Cardiac septum (tissue), 1 donor: ENCODE measurements at regions of chr19 and their contacts with region 1.

Region 1: GRCh38 chr19:49363268-49364082 is at the start of gene DKKL1:
- DNase-seq: peak; percentile 99
- total RNA-seq, gene DKKL1: not detected

Region 2: GRCh38 chr19:49340069-49340864 is 23.2 kb before region 1 on chr19:
- intact Hi-C with region 1: loop called (anchors 2 kb)
- DNase-seq: peak; percentile 77

Region 3: GRCh38 chr19:49421039-49421877 is 57.8 kb after region 1 on chr19:
- intact Hi-C with region 1: no loop called
- DNase-seq: no peak

Region 4: DNA sequence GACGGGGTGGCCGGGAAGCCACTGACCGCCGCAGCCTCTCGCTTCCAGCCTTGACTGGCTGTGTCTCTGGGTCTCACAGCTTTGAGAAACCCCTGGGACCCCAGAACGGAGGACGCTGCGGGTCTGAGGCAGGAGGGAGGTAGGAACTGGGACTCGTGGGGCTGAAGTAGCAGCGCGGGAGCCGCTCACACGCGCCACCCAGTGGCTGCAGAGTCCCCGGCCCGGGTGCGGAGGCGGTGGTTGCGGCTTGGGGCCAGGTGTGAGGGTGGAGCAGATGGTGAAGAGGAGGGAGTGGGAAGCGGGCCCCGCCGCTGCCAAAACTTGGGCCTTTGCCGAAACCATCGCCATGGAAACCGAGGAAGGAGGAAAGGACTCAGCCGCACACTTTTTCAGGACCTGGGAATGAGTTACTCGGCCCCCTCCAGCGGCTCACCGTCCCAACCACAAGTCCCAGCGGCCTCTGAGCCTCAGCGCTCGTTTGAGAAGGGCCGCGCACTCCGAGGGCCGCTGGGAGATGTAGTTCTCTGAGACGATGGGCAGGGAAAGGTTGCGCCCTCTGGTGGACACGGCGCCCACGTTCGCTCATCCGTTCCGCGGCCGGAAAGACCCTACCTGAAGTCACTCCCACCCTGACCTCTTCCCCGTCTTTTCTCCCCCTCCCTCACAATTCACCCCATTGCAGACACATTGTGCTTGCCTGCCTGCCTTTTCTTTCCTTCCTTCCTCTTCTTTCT is 80.1 kb after region 1 on chr19:
- intact Hi-C with region 1: loop called (anchors 2 kb)
- DNase-seq: peak; percentile 96